ENCODE measurements at regions of chr15 and their contacts with region 1.

Region 1: GRCh38 chr15:66765478-66766281 is 63.6 kb downstream of the SMAD6 start:
- DNase-seq: peak; percentile 95 to 97
- ATAC-seq: peak; percentile 71 to 75
- H3K4me3 ChIP-seq: no peak overlapping the region; the same call in 1 of the 3 replicates
- H3K27ac ChIP-seq: peak overlapping the region; percentile 93 to 94
- H3K4me1 ChIP-seq: peaks cover 97% of the 10 kb centered on the region
- CTCF ChIP-seq: no peak
- EP300 ChIP-seq: peak; percentile 95 to 98
- POLR2A ChIP-seq: no peak
- RAD21 ChIP-seq: peak in 1 of 2 experiments; percentile 67; a peak in 4 of 5 replicates

Region 2: DNA sequence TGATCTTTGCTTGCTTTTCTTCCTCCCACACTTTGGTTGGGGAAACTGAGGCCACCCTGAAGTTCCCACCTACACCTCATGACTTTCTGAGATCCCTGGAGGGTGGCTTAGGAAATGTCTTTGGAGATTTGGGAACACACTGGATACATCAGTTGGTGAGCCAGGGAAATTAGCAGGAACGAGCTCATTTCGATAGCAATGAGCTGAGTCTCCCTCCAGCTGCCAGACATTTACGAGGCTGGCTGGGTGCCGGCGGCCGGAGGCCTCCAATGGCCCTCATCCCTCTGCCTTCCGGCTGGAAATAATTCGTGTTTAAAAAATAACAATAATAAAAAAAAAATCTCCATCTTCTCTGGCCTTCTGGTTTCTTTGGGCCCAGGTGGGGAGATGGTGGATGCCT is 24.9 kb before region 1 on chr15:
- CTCF ChIA-PET with region 1: interaction called, 10 read pairs
- POLR2A ChIA-PET with region 1: no interaction called
- DNase-seq: no peak
- ATAC-seq: no peak
- H3K4me3 ChIP-seq: no peak overlapping the region
- H3K27ac ChIP-seq: peak overlapping the region in 1 of 2 experiments; percentile 33; a peak in 1 of 6 replicates
- H3K4me1 ChIP-seq: peaks cover 36% of the 10 kb centered on the region
- CTCF ChIP-seq: no peak
- EP300 ChIP-seq: no peak
- POLR2A ChIP-seq: no peak
- RAD21 ChIP-seq: no peak

Region 3: DNA sequence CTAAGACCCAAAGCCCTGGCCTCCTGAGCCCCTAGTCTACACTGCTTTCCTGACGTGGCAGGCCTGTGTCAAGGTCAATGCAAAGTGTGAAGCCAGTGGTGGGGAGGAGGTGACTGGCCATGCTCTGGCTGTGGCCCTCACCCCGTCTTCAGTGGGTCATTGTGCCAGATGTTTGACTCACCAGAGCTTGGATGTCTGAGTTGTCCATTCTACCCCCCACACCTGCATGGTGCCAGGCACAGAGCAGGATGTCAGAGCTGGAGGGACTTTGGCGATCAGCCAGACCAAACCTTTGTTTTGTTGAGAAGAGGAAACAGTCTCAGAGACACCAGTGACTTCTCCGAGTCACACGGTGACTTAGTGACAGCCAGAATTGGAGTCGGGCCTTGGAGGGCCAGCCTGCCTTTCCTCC is 14.1 kb before region 1 on chr15:
- CTCF ChIA-PET with region 1: interaction called, 143 read pairs
- POLR2A ChIA-PET with region 1: no interaction called
- DNase-seq: peak in 1 of 2 experiments; percentile 77
- ATAC-seq: peak; percentile 16 to 32; a peak in 5 of 6 replicates
- H3K4me3 ChIP-seq: no peak overlapping the region
- H3K27ac ChIP-seq: peak overlapping the region; percentile 71 to 87
- H3K4me1 ChIP-seq: peaks cover 76% of the 10 kb centered on the region
- CTCF ChIP-seq: no peak
- EP300 ChIP-seq: peak in 1 of 2 experiments; percentile 24; a peak in 1 of 5 replicates
- POLR2A ChIP-seq: no peak
- RAD21 ChIP-seq: no peak

Measured in A549 (cell line).